Naive thymus-derived CD4-positive, alpha-beta T cell (primary cell): ENCODE measurements at regions of chr11 and their contacts with region 1.

Region 1: GRCh38 chr11:34468209-34468841 is 29.6 kb downstream of the CAT start:
- DNase-seq: peak in 6 of 9 donors; percentile 9 to 48 (median 32)
- ATAC-seq: peak; percentile 71
- H3K4me3 ChIP-seq: no peak overlapping the region
- H3K4me3 Mint-ChIP-seq: no peak overlapping the region
- H3K27ac ChIP-seq: no peak overlapping the region
- H3K27ac Mint-ChIP-seq: peak overlapping the region in 3 of 9 donors; percentile 1 to 62 (median 46)
- H3K4me1 ChIP-seq: no peaks in the 10 kb centered on the region
- H3K4me1 Mint-ChIP-seq: peaks cover 0 to 11% (median 4%) of the 10 kb centered on the region in 7 donors
- H3K27me3 ChIP-seq: no peaks in the 10 kb centered on the region
- H3K27me3 Mint-ChIP-seq: no peaks in the 10 kb centered on the region

Region 2: GRCh38 chr11:33857933-33858371 is 610.4 kb before region 1 on chr11:
- CTCF ChIA-PET with region 1: interaction called, 3 read pairs
- POLR2A ChIA-PET with region 1: no interaction called
- intact Hi-C with region 1: loop called in 1 of 2 experiments (anchors 1 kb)
- DNase-seq: peak; percentile 41 to 75 (median 63)
- ATAC-seq: peak; percentile 96
- H3K4me3 ChIP-seq: no peak overlapping the region
- H3K4me3 Mint-ChIP-seq: no peak overlapping the region
- H3K27ac ChIP-seq: no peak overlapping the region
- H3K27ac Mint-ChIP-seq: no peak overlapping the region
- H3K4me1 ChIP-seq: no peaks in the 10 kb centered on the region
- H3K4me1 Mint-ChIP-seq: peaks cover 0 to 2% (median 0%) of the 10 kb centered on the region in 7 donors
- H3K27me3 ChIP-seq: no peaks in the 10 kb centered on the region
- H3K27me3 Mint-ChIP-seq: peaks cover 25 to 74% (median 50%) of the 10 kb centered on the region in 5 donors

Region 3: DNA sequence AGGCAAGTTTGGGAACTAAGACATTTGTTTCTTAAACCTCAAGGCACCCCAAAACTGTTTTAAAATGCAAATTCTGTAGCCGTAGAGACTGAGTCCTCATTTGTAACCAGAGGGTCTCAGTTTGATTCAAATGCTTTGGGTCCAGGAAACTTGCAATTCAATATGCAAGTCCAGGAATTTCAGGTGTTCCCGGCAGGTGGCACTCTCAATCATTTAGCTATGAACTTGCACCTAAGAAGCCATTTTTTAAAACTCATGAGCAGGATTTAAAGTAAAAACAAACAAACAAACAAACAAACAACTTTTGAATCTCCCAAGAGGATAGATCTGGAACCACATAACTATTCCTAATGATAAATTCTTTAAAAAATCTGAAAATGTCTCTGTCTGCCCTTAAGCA is 101.8 kb before region 1 on chr11:
- CTCF ChIA-PET with region 1: interaction called, 4 read pairs
- POLR2A ChIA-PET with region 1: no interaction called
- intact Hi-C with region 1: loop called in 1 of 2 experiments (anchors 1 kb)
- DNase-seq: no peak
- ATAC-seq: no peak
- H3K4me3 ChIP-seq: no peak overlapping the region
- H3K4me3 Mint-ChIP-seq: no peak overlapping the region
- H3K27ac ChIP-seq: no peak overlapping the region
- H3K27ac Mint-ChIP-seq: no peak overlapping the region
- H3K4me1 ChIP-seq: no peaks in the 10 kb centered on the region
- H3K4me1 Mint-ChIP-seq: peaks cover 3 to 21% (median 14%) of the 10 kb centered on the region in 7 donors
- H3K27me3 ChIP-seq: no peaks in the 10 kb centered on the region
- H3K27me3 Mint-ChIP-seq: peaks cover 0 to 41% (median 10%) of the 10 kb centered on the region in 5 donors

Region 4: DNA sequence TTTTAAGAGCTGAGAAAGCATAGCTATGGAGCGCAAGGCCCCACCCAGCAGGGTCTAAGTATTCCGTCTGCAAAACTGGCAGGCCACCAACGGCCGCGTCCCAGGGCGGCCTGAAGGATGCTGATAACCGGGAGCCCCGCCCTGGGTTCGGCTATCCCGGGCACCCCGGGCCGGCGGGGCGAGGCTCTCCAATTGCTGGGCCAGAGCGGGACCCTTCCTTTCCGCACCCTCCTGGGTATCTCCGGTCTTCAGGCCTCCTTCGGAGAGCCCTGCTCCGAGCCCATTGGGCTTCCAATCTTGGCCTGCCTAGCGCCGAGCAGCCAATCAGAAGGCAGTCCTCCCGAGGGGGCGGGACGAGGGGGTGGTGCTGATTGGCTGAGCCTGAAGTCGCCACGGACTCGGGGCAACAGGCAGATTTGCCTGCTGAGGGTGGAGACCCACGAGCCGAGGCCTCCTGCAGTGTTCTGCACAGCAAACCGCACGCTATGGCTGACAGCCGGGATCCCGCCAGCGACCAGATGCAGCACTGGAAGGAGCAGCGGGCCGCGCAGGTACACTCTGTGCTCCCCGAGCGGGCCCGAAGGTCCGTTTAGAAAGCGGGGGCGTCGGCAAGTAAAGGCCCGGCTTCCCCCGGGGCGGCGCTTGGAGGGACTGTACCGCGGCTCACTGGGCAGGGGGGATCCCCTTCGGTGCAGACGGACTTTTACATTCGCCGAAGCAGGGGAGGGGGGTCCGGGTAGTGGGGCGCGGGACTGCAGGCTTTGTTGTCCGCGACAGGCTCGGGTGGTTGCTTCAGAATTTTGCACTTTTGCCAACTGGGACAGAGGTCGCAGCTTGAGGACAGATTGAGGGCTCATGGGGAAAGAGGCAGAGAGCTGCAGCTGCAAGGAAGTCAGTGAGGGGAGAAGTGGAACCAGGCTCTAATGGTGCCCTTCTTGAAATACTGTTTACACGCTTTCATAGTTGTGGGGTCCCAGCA is 29.5 kb before region 1 on chr11 and contains the start of gene CAT:
- CTCF ChIA-PET with region 1: no interaction called
- POLR2A ChIA-PET with region 1: interaction called, 3 read pairs
- intact Hi-C with region 1: loop called in 1 of 2 experiments (anchors 1 kb)
- DNase-seq: peak; percentile 94 to 98 (median 97)
- ATAC-seq: peak; percentile 98
- H3K4me3 ChIP-seq: peak within 1 kb of the TSS; percentile 90
- H3K4me3 Mint-ChIP-seq: peak within 1 kb of the TSS; percentile 88 to 98 (median 96)
- H3K27ac ChIP-seq: peak within 1 kb of the TSS; percentile 79
- H3K27ac Mint-ChIP-seq: peak within 1 kb of the TSS; percentile 89 to 97 (median 93)
- H3K4me1 ChIP-seq: peaks cover 7 to 19% of the 10 kb centered on the region in 2 donors
- H3K4me1 Mint-ChIP-seq: peaks cover 21 to 47% (median 35%) of the 10 kb centered on the region in 7 donors
- H3K27me3 ChIP-seq: no peaks in the 10 kb centered on the region
- H3K27me3 Mint-ChIP-seq: no peaks in the 10 kb centered on the region
- total RNA-seq, gene CAT: 23.3 to 55.9 (median 42.6) TPM